H1 (cell line): ENCODE measurements at regions of chr2 and their contacts with region 1.

Region 1: DNA sequence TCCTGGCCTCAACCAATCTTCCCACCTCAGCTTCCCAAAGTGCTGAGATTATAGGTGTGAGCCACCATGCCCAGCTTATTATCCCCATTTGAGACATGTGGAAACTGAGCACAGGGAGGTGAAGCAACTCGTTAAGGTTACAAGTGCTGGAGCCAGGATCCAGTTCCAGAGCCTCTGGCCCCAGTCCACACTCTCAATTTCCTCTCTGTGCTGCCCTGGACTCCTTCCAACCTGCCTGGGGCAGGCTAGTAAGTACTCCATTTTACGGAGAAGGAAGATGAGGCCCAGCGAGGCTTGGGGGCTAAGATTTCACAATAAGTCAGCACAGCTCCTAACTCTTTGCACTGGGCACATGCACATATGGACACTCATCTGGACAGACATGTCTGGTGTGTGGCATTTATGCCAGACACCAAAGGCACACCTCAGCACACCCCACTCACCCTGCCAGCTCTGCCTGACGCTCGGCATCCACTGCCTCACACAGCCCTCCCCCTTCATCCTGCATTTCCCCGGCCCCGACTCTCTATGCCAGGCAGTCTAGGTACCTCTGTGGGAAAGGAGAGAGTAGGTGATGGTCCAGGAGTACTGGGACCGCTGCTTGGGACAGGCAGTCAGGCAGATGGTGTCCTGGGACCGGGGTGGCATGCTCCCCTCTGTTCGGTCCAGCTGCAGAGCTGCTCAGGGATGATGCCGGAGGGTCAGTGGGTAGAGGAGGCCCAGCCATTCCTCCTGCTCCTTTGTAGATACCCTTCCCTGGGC is 20.5 kb downstream of the CFAP65 start:
- DNase-seq: no peak
- H3K4me3 ChIP-seq: no peak overlapping the region
- H3K27ac ChIP-seq: no peak overlapping the region
- H3K4me1 ChIP-seq: no peaks in the 10 kb centered on the region
- H3K27me3 ChIP-seq: peaks cover 0 to 3% (median 0%) of the 10 kb centered on the region in 4 experiments; a peak in 3 of 7 replicates
- CTCF ChIP-seq: no peak
- EP300 ChIP-seq: no peak
- POLR2A ChIP-seq: no peak
- RAD21 ChIP-seq: no peak

Region 2: DNA sequence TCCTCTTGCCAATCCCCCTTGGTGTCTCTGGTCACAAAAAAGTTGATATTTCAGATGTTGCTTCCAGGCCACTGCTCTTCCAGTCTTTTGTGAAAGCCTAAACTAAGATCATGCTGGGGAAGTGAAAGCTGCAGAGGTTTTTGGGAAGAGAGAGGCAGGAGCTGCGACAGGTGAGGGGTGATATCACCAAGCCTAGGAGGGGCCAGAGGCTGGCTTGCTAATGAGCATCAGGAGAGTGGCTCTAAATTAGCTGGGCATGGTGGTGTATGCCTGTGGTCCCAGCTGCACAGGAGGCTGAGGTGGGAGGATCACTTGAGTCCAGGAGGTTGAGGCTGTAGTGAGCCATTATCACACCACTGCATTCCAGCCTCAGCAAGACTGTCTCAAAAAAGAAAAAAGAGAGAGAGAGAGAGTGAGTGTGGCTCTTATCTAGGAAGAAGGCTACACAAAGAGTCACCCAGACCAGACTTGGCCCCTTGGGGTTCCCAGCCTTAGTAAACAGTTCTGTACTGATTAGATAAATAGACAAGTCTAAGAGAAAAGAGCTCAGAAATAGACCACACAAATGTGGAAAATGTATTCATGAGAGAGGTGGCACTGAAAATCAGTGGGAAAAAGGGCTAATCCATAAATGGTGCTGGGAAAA is 75.9 kb before region 1 on chr2:
- CTCF ChIA-PET with region 1: no interaction called
- POLR2A ChIA-PET with region 1: no interaction called
- DNase-seq: no peak
- H3K4me3 ChIP-seq: no peak overlapping the region
- H3K27ac ChIP-seq: no peak overlapping the region
- H3K4me1 ChIP-seq: no peaks in the 10 kb centered on the region
- H3K27me3 ChIP-seq: no peaks in the 10 kb centered on the region; a peak in 2 of 7 replicates
- CTCF ChIP-seq: no peak
- EP300 ChIP-seq: no peak
- POLR2A ChIP-seq: no peak
- RAD21 ChIP-seq: no peak

Region 3: GRCh38 chr2:219010162-219010756 is 10.5 kb before region 1 on chr2:
- CTCF ChIA-PET with region 1: interaction called, 150 read pairs
- POLR2A ChIA-PET with region 1: interaction called, 5 read pairs
- DNase-seq: no peak
- H3K4me3 ChIP-seq: no peak overlapping the region
- H3K27ac ChIP-seq: no peak overlapping the region
- H3K4me1 ChIP-seq: no peaks in the 10 kb centered on the region
- H3K27me3 ChIP-seq: peaks cover 1 to 21% (median 10%) of the 10 kb centered on the region in 4 experiments
- CTCF ChIP-seq: peak; percentile 67 to 85 (median 81)
- EP300 ChIP-seq: no peak
- POLR2A ChIP-seq: no peak
- RAD21 ChIP-seq: peak; percentile 69 to 75

Region 4: GRCh38 chr2:219087361-219087760 is 66.6 kb after region 1 on chr2:
- CTCF ChIA-PET with region 1: no interaction called
- POLR2A ChIA-PET with region 1: no interaction called
- DNase-seq: no peak
- H3K4me3 ChIP-seq: no peak overlapping the region
- H3K27ac ChIP-seq: no peak overlapping the region
- H3K4me1 ChIP-seq: no peaks in the 10 kb centered on the region
- H3K27me3 ChIP-seq: no peaks in the 10 kb centered on the region
- CTCF ChIP-seq: no peak
- EP300 ChIP-seq: no peak
- POLR2A ChIP-seq: no peak
- RAD21 ChIP-seq: no peak

Region 5: GRCh38 chr2:219279517-219280516 is 259.0 kb after region 1 on chr2:
- CTCF ChIA-PET with region 1: no interaction called
- POLR2A ChIA-PET with region 1: no interaction called
- DNase-seq: no peak
- H3K4me3 ChIP-seq: peak overlapping the region; percentile 45 to 75 (median 52)
- H3K27ac ChIP-seq: no peak overlapping the region
- H3K4me1 ChIP-seq: peaks cover 9 to 23% (median 12%) of the 10 kb centered on the region in 4 experiments; a peak in 6 of 7 replicates
- H3K27me3 ChIP-seq: no peaks in the 10 kb centered on the region; a peak in 1 of 7 replicates
- CTCF ChIP-seq: no peak
- EP300 ChIP-seq: no peak
- POLR2A ChIP-seq: no peak
- RAD21 ChIP-seq: no peak; a peak in 1 of 4 replicates